Activated naive CD8-positive, alpha-beta T cell treated with anti-CD3 and anti-CD28 coated beads, Interleukin-2, amount 10 ng/mL, durations not matched to agents 7 days and 5 days (primary cell): ENCODE measurements at regions of chr2 and their contacts with region 1.

Region 1: GRCh38 chr2:233061591-233062450 is 1.7 kb downstream of the INPP5D start:
- DNase-seq: peak; percentile 65
- ATAC-seq: peak; percentile 10
- H3K4me3 Mint-ChIP-seq: peak overlapping the region; percentile 98
- H3K27ac Mint-ChIP-seq: peak overlapping the region; percentile 99
- H3K4me1 Mint-ChIP-seq: peaks cover 31% of the 10 kb centered on the region
- H3K27me3 Mint-ChIP-seq: no peaks in the 10 kb centered on the region

Region 2: GRCh38 chr2:233075966-233076339 is 14.1 kb after region 1 on chr2:
- POLR2A ChIA-PET with region 1: interaction called, 123 read pairs
- DNase-seq: no peak
- ATAC-seq: peak; percentile 62
- H3K4me3 Mint-ChIP-seq: no peak overlapping the region
- H3K27ac Mint-ChIP-seq: no peak overlapping the region
- H3K4me1 Mint-ChIP-seq: peaks cover 36% of the 10 kb centered on the region
- H3K27me3 Mint-ChIP-seq: no peaks in the 10 kb centered on the region

Region 3: DNA sequence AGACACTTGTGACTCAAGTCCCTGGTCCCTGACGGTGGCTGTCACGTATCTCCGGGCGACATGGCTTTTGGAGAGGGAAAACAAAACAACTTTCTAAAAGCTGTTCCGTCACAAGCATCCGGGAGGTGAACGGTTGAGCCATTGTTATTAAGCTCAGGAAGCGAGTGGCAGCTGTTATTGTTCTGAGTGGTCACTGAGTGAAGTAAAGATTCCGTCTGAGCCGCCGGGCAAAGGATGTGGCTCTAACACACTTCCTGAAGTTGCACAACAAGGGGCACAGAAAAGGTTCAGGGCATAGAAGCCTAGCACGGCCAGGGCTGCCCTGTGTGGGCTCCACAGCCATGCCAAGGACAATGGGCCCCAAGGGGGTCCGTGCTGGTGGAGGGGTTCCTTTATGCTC is 22.7 kb after region 1 on chr2:
- POLR2A ChIA-PET with region 1: interaction called, 123 read pairs
- DNase-seq: no peak
- ATAC-seq: peak; percentile 35
- H3K4me3 Mint-ChIP-seq: peak overlapping the region; percentile 74
- H3K27ac Mint-ChIP-seq: peak overlapping the region; percentile 90
- H3K4me1 Mint-ChIP-seq: peaks cover 67% of the 10 kb centered on the region
- H3K27me3 Mint-ChIP-seq: no peaks in the 10 kb centered on the region

Region 4: GRCh38 chr2:233142355-233142897 is 80.6 kb after region 1 on chr2:
- POLR2A ChIA-PET with region 1: interaction called, 15 read pairs
- DNase-seq: peak; percentile 70
- ATAC-seq: peak; percentile 82
- H3K4me3 Mint-ChIP-seq: peak overlapping the region; percentile 69
- H3K27ac Mint-ChIP-seq: peak overlapping the region; percentile 86
- H3K4me1 Mint-ChIP-seq: peaks cover 46% of the 10 kb centered on the region
- H3K27me3 Mint-ChIP-seq: no peaks in the 10 kb centered on the region

Region 5: DNA sequence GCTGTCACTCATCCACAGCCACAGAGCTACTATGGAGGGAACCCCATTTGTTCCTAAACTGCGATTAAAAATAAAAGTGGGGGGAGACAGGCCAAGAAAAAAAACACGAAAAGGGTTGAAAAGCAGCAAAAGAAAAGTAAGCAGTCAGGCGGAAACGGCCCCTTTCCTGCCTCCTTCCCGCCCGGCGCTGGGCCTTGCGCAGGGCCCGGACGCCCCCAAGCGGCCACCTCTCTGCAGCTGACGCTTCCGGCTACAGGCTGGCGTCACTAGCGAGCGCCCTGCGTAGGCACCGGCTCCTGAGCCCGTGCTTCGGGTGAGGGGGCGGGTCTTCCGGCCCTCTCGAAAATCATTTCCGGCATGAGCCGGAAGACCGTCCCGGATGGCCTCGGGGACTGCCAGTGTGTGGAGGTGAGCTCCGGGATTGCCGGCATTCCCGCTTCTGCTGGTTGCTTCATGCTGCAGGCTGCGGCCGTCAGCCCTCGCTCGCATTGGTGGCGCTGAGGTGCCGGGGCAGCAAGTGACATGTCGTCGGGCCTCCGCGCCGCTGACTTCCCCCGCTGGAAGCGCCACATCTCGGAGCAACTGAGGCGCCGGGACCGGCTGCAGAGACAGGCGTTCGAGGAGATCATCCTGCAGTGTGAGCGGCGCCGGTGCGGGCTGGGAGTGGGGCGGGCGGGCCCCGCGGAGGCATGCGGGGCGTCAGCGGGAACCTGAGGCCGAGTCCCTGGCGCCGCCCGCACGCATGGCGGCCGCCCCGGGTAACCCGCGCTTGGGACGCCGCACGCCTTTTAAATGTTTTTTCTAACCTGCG is 189.7 kb after region 1 on chr2 and contains the start of gene ATG16L1:
- POLR2A ChIA-PET with region 1: interaction called, 35 read pairs
- DNase-seq: peak; percentile 96
- ATAC-seq: peak; percentile 97
- H3K4me3 Mint-ChIP-seq: peak within 1 kb of the TSS; percentile 87
- H3K27ac Mint-ChIP-seq: peak within 1 kb of the TSS; percentile 95
- H3K4me1 Mint-ChIP-seq: peaks cover 56% of the 10 kb centered on the region
- H3K27me3 Mint-ChIP-seq: no peaks in the 10 kb centered on the region
- total RNA-seq, gene ATG16L1: 60.8 to 67.6 TPM